CD8-positive, alpha-beta T cell (primary cell): ENCODE measurements at regions of chr6 and their contacts with region 1.

Region 1: GRCh38 chr6:148746363-148747144 is at the start of gene UST:
- DNase-seq: peak; percentile 48 to 89 (median 70)
- ATAC-seq: peak; percentile 61
- H3K4me3 ChIP-seq: peak within 1 kb of the TSS; percentile 76 to 86
- H3K4me3 Mint-ChIP-seq: peak within 1 kb of the TSS; percentile 94
- H3K27ac ChIP-seq: peak within 1 kb of the TSS in 1 of 2 experiments; percentile 63
- H3K27ac Mint-ChIP-seq: peak within 1 kb of the TSS; percentile 90
- H3K4me1 ChIP-seq: peaks cover 11% of the 10 kb centered on the region
- H3K4me1 Mint-ChIP-seq: peaks cover 26% of the 10 kb centered on the region
- H3K27me3 ChIP-seq: no peaks in the 10 kb centered on the region
- H3K27me3 Mint-ChIP-seq: peaks cover 19% of the 10 kb centered on the region
- CTCF ChIP-seq: peak; percentile 57
- total RNA-seq, gene UST: 0.90 to 1.0 TPM

Region 2: DNA sequence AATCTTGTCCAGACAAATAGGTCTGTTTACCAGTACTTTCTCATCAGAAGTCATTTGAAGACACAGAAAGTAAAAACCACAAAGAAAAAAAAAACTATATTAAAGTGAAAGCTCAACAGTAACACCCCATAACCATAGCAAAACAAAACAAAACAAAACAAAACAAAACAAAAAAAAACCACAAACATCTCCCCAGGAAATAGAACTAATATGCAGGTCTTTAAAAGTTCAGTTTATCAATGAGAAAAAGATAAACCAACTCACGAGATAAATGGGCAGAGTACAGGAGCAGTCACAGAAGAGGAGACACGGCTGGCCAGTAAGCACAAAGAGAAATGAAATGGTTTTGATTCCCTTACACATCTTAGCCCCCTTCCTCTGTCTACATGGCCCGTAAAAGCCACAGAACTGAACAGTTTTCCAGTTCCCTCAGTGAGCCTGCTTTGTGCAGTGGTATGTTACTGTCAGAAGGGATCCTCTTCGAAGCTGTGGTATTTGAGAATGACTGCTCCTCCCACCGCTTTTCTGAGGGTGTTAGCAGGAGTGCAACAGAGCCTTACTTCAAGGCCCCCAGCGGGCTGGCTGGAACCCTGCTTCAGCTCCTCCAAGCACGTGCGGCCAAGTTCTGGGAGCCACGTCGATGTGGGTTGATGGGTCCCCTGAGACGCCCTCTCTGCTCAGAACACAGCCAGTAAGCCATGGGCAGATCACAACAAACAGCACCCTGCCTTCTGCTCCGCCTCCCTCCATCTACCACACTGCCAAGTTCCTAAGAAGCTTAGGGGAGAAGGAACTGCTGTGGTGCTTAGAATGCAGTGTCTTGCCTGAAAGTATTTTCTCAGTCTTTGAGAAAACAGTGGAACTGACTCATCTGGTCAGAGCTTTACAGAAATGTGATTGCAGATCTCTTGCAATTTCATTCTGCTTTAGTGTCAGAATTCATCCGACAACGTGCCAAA is 14.3 kb after region 1 on chr6:
- CTCF ChIA-PET with region 1: interaction called, 3 read pairs
- POLR2A ChIA-PET with region 1: interaction called, 30 read pairs
- intact Hi-C with region 1: loop called in 1 of 2 experiments (anchors 1 kb)
- DNase-seq: peak; percentile 24 to 86 (median 52)
- ATAC-seq: peak; percentile 58
- H3K4me3 ChIP-seq: peak overlapping the region; percentile 33 to 44
- H3K4me3 Mint-ChIP-seq: peak overlapping the region; percentile 71
- H3K27ac ChIP-seq: peak overlapping the region; percentile 60 to 93
- H3K27ac Mint-ChIP-seq: peak overlapping the region; percentile 95
- H3K4me1 ChIP-seq: peaks cover 44% of the 10 kb centered on the region
- H3K4me1 Mint-ChIP-seq: peaks cover 63% of the 10 kb centered on the region
- H3K27me3 ChIP-seq: no peaks in the 10 kb centered on the region
- H3K27me3 Mint-ChIP-seq: no peaks in the 10 kb centered on the region
- CTCF ChIP-seq: no peak

Region 3: DNA sequence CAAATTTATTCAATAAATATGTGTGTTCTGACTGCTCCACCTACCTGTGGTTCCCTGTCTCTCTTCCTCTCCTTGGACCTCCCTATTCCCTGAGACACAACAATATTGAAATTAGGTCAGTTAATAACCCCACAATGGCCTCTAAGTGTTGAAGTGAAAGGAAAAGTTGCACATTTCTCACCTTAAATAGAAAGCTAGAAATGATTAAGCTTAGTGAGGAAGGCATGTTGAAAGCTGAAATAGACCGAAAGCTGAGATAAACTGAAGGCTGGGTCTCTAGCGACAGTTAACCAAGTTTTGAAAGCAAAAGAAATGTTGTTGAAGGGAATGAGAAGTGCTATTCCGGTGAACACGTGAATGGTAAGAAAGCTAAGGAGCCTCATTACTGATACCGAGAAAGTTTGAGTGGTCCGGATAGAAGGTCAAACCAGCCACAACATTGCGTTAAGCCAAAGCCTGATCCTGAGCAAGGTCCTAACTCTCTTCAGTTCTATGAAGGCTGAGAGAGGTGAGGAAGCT is 34.4 kb after region 1 on chr6:
- CTCF ChIA-PET with region 1: no interaction called
- POLR2A ChIA-PET with region 1: no interaction called
- intact Hi-C with region 1: loop called in 1 of 2 experiments (anchors 5 kb)
- DNase-seq: peak in 2 of 9 experiments; percentile 27 to 53
- ATAC-seq: peak; percentile 14
- H3K4me3 ChIP-seq: peak overlapping the region in 1 of 2 experiments; percentile 25
- H3K4me3 Mint-ChIP-seq: peak overlapping the region; percentile 70
- H3K27ac ChIP-seq: peak overlapping the region in 1 of 2 experiments; percentile 49
- H3K27ac Mint-ChIP-seq: peak overlapping the region; percentile 66
- H3K4me1 ChIP-seq: no peaks in the 10 kb centered on the region
- H3K4me1 Mint-ChIP-seq: peaks cover 16% of the 10 kb centered on the region
- H3K27me3 ChIP-seq: no peaks in the 10 kb centered on the region
- H3K27me3 Mint-ChIP-seq: no peaks in the 10 kb centered on the region
- CTCF ChIP-seq: no peak

Region 4: GRCh38 chr6:148831064-148831463 is 84.5 kb after region 1 on chr6:
- CTCF ChIA-PET with region 1: no interaction called
- POLR2A ChIA-PET with region 1: no interaction called
- intact Hi-C with region 1: loop called (anchors 1 to 5 kb)
- DNase-seq: peak in 8 of 9 experiments; percentile 9 to 74 (median 36)
- ATAC-seq: peak; percentile 84
- H3K4me3 ChIP-seq: peak overlapping the region in 1 of 2 experiments; percentile 42
- H3K4me3 Mint-ChIP-seq: peak overlapping the region; percentile 82
- H3K27ac ChIP-seq: peak overlapping the region in 1 of 2 experiments; percentile 37
- H3K27ac Mint-ChIP-seq: peak overlapping the region; percentile 45
- H3K4me1 ChIP-seq: peaks cover 5% of the 10 kb centered on the region
- H3K4me1 Mint-ChIP-seq: peaks cover 29% of the 10 kb centered on the region
- H3K27me3 ChIP-seq: no peaks in the 10 kb centered on the region
- H3K27me3 Mint-ChIP-seq: no peaks in the 10 kb centered on the region
- CTCF ChIP-seq: no peak

Region 5: DNA sequence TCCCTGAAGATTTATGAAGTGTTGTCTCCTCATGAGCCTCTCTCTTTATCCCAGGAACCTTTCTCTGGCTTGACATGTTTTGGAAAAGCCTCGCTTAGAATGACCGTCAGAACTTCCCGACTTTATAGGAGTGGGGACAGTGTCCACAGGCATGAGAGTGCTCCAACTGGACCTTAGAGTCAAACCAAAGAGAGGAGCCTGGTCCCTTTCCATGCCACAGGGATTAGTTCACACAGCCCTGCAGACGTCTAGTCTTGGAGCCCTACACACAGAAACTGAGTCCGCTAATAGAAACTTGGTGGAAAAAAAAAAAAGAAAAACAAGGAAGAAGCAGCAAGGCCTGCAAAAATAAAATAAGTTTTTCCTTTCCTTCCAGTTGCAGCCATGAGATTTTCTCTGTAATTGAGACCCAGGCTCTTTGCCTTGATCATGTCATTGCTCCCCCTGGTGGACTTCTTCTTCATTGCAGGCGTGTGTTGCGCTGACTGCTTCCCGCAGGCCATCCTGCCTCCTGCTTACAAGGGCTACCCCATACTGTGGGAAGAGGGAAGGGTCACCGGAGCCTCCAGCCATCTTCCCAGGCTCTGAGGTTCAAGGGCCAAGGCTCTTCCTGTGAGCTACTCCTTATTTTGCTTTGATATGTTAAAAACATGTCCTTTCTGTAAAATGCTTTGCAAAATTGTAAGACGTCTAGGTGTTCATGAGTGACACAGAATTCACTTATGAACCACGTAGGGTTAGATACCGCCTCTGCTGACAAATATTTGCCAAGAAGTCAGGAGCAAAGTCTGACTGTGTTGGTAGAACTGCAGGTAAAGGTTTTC is 201.3 kb after region 1 on chr6:
- CTCF ChIA-PET with region 1: interaction called, 4 read pairs
- POLR2A ChIA-PET with region 1: no interaction called
- intact Hi-C with region 1: loop called (anchors 1 kb)
- DNase-seq: peak; percentile 56 to 86 (median 84)
- ATAC-seq: peak; percentile 94
- H3K4me3 ChIP-seq: no peak overlapping the region
- H3K4me3 Mint-ChIP-seq: no peak overlapping the region
- H3K27ac ChIP-seq: no peak overlapping the region
- H3K27ac Mint-ChIP-seq: no peak overlapping the region
- H3K4me1 ChIP-seq: no peaks in the 10 kb centered on the region
- H3K4me1 Mint-ChIP-seq: no peaks in the 10 kb centered on the region
- H3K27me3 ChIP-seq: no peaks in the 10 kb centered on the region
- H3K27me3 Mint-ChIP-seq: peaks cover 4% of the 10 kb centered on the region
- CTCF ChIP-seq: peak; percentile 74